ENCODE measurements at regions of chr12 and their contacts with region 1.

Region 1: GRCh38 chr12:116277393-116278278 is at the start of gene MED13L:
- DNase-seq: peak; percentile 92 to 93
- ATAC-seq: peak; percentile 80 to 90 (median 86)
- H3K4me3 ChIP-seq: peak within 1 kb of the TSS; percentile 92
- H3K4me3 Mint-ChIP-seq: peak within 1 kb of the TSS; percentile 96
- H3K27ac ChIP-seq: peak within 1 kb of the TSS; percentile 50
- H3K27ac Mint-ChIP-seq: peak within 1 kb of the TSS; percentile 88 to 93
- H3K4me1 ChIP-seq: peaks cover 15% of the 10 kb centered on the region
- H3K4me1 Mint-ChIP-seq: peaks cover 43% of the 10 kb centered on the region in 2 donors
- H3K27me3 ChIP-seq: no peaks in the 10 kb centered on the region
- H3K27me3 Mint-ChIP-seq: no peaks in the 10 kb centered on the region
- CTCF ChIP-seq: peak; percentile 19
- total RNA-seq, gene MED13L: 237 to 316 (median 240) TPM

Region 2: GRCh38 chr12:116066381-116067230 is 211.0 kb before region 1 on chr12:
- intact Hi-C with region 1: loop called (anchors 5 kb)
- DNase-seq: peak; percentile 42 to 80
- ATAC-seq: peak; percentile 83 to 94 (median 84)
- H3K4me3 ChIP-seq: no peak overlapping the region
- H3K4me3 Mint-ChIP-seq: no peak overlapping the region
- H3K27ac ChIP-seq: no peak overlapping the region
- H3K27ac Mint-ChIP-seq: peak overlapping the region; percentile 13 to 50
- H3K4me1 ChIP-seq: peaks cover under 1% of the 10 kb centered on the region
- H3K4me1 Mint-ChIP-seq: peaks cover 41 to 44% of the 10 kb centered on the region in 2 donors
- H3K27me3 ChIP-seq: no peaks in the 10 kb centered on the region
- H3K27me3 Mint-ChIP-seq: no peaks in the 10 kb centered on the region
- CTCF ChIP-seq: peak; percentile 95

Region 3: DNA sequence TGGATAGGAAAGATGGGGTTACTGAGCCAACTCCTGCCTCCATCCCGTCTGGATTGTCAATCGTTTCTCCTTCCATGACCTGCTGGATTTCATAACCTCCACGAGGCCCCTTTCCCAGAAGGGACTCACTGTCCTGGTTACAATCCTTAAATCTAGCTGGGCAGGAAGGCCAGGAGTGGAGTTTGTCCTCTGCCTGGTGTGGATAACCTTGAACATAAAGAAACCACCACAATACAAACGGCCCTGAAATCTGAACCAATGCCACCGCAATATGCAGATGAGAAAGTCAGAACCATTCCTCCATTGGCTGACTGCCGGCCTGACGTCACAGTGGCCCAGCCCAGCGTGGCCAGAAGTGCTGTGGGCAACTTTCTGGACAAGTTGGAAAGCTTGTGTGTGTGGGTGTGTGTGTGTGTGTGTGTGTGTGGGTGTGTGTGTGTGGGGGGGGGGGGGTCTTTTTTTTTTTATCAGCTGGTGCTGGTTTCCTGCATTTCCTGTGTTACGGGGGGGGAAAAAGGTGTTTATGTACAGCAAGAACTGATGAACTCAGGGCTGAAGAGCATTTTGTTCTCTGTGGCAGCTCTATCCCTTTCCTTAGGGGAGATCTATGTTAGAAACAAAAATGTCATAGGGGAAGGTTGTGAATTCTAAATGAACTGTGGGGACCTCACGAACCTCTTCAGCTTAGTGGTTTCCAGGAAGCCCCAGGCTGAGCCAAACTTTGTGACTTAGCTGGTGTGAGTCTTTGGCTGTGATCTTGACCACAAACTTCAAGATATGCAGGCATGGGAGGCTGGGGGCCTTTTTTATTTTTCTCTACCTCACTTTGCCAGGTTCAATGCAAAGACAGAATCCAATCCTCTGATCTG is 81.5 kb after region 1 on chr12:
- intact Hi-C with region 1: loop called (anchors 2 kb)
- DNase-seq: peak; percentile 74 to 88
- ATAC-seq: peak; percentile 94 to 95 (median 94)
- H3K4me3 ChIP-seq: no peak overlapping the region
- H3K4me3 Mint-ChIP-seq: peak overlapping the region; percentile 65
- H3K27ac ChIP-seq: peak overlapping the region; percentile 45
- H3K27ac Mint-ChIP-seq: peak overlapping the region; percentile 81
- H3K4me1 ChIP-seq: peaks cover 31% of the 10 kb centered on the region
- H3K4me1 Mint-ChIP-seq: peaks cover 27 to 28% of the 10 kb centered on the region in 2 donors
- H3K27me3 ChIP-seq: no peaks in the 10 kb centered on the region
- H3K27me3 Mint-ChIP-seq: no peaks in the 10 kb centered on the region
- CTCF ChIP-seq: no peak

Region 4: GRCh38 chr12:116426391-116427136 is 148.9 kb after region 1 on chr12:
- intact Hi-C with region 1: no loop called
- DNase-seq: no peak
- ATAC-seq: no peak
- H3K4me3 ChIP-seq: no peak overlapping the region
- H3K4me3 Mint-ChIP-seq: no peak overlapping the region
- H3K27ac ChIP-seq: no peak overlapping the region
- H3K27ac Mint-ChIP-seq: no peak overlapping the region
- H3K4me1 ChIP-seq: no peaks in the 10 kb centered on the region
- H3K4me1 Mint-ChIP-seq: no peaks in the 10 kb centered on the region
- H3K27me3 ChIP-seq: no peaks in the 10 kb centered on the region
- H3K27me3 Mint-ChIP-seq: peaks cover 0 to 5% of the 10 kb centered on the region in 2 donors
- CTCF ChIP-seq: no peak